ENCODE measurements at regions of chr5 and their contacts with region 1.

Region 1: DNA sequence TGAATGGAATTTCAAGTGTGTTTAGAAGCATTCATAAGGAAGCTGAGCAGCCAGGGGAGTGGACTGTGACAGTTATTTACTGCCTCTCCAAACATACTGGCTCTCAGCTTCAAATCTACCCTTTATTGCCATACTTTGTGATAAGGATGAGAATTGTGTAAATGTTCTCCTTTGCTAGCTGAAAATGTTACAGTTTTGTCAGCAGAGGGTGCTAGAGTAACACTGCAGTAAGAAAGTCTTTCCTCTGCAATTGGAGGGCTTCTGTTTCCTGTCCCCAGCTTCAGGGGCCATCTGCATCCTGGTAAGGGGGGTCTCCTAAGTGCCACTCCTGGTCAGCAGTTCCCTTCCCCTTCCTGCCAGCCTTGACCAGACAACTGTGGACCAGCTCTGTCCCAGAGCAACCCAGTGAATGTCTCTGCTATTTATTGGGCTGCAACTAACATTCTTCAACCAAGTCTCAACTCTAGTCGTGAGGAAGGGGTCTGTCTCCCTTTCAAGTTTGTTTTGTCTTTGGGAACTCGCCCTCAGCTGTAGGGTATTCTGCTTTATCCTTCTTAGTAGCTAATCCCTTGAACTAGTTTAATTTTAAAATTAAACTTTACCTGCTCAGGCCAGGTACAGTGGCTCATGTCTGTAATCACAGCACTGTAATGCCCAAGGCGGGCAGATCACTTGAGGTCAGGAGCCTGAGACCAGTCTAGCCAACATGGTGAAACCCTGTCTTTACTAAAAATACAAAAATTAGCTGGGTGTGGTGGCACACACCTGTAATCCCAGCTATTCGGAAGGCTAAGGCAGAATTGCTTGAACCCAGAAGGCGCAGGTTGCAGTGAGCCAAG is 45.3 kb downstream of the RAPGEF6 start:
- DNase-seq: peak in 8 of 9 donors; percentile 8 to 71 (median 62)
- ATAC-seq: peak; percentile 80
- H3K4me3 ChIP-seq: no peak overlapping the region
- H3K4me3 Mint-ChIP-seq: no peak overlapping the region
- H3K27ac ChIP-seq: peak overlapping the region; percentile 9
- H3K27ac Mint-ChIP-seq: peak overlapping the region; percentile 10 to 75 (median 52)
- H3K4me1 ChIP-seq: peaks cover 4 to 5% of the 10 kb centered on the region in 2 donors
- H3K4me1 Mint-ChIP-seq: peaks cover 21 to 63% (median 58%) of the 10 kb centered on the region in 7 donors
- H3K27me3 ChIP-seq: no peaks in the 10 kb centered on the region
- H3K27me3 Mint-ChIP-seq: no peaks in the 10 kb centered on the region

Region 2: DNA sequence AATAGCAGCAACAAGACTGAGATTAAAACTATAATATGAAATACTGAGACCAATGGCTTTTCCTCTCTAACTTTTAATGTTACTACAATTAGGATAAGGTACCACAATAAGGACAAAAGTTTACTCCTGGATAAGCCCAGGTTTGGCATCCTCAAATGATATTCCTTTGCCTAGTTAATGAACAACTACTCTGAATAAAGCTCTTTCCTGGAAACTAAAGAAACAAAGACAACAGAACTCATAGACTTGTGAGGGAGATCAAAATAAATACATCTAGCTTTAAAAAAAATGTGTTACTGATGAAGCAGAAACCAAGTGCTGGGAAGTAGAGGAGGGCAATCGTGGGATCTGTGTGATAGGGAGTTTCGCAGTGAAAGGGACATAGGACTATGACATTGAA is 64.6 kb after region 1 on chr5:
- CTCF ChIA-PET with region 1: no interaction called
- POLR2A ChIA-PET with region 1: no interaction called
- intact Hi-C with region 1: no loop called
- DNase-seq: no peak
- ATAC-seq: no peak
- H3K4me3 ChIP-seq: no peak overlapping the region
- H3K4me3 Mint-ChIP-seq: no peak overlapping the region
- H3K27ac ChIP-seq: no peak overlapping the region
- H3K27ac Mint-ChIP-seq: peak overlapping the region in 2 of 9 donors; percentile 9 to 61
- H3K4me1 ChIP-seq: no peaks in the 10 kb centered on the region
- H3K4me1 Mint-ChIP-seq: peaks cover 3 to 22% (median 9%) of the 10 kb centered on the region in 7 donors
- H3K27me3 ChIP-seq: no peaks in the 10 kb centered on the region
- H3K27me3 Mint-ChIP-seq: no peaks in the 10 kb centered on the region

Region 3: DNA sequence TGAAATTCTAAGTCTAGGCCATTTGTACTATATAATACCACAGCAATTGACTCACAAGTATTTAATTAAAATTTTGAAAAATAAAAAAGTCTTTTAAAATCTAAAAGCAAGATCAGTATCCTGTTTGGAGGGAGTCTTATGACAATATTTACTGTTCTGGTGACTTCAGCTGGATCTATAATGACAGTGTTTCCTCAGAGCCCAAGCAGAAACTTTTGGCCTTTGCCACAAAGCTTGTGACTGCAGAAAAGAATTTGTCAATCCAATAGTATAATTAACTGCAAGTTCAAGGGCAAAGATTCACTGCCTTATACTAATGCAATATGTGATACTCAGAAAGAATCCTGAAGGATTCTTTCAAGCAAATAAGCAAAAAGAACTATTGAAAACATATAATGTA is 94.9 kb after region 1 on chr5:
- CTCF ChIA-PET with region 1: no interaction called
- POLR2A ChIA-PET with region 1: no interaction called
- intact Hi-C with region 1: loop called in 1 of 2 experiments (anchors 1 kb)
- DNase-seq: no peak
- ATAC-seq: no peak
- H3K4me3 ChIP-seq: no peak overlapping the region
- H3K4me3 Mint-ChIP-seq: no peak overlapping the region
- H3K27ac ChIP-seq: no peak overlapping the region
- H3K27ac Mint-ChIP-seq: no peak overlapping the region
- H3K4me1 ChIP-seq: no peaks in the 10 kb centered on the region
- H3K4me1 Mint-ChIP-seq: peaks cover 0 to 5% (median 0%) of the 10 kb centered on the region in 7 donors
- H3K27me3 ChIP-seq: no peaks in the 10 kb centered on the region
- H3K27me3 Mint-ChIP-seq: no peaks in the 10 kb centered on the region

Region 4: GRCh38 chr5:131810510-131811249 is 221.0 kb after region 1 on chr5:
- CTCF ChIA-PET with region 1: interaction called, 3 read pairs
- POLR2A ChIA-PET with region 1: no interaction called
- intact Hi-C with region 1: loop called in 1 of 2 experiments (anchors 2 kb)
- DNase-seq: peak in 4 of 9 donors; percentile 21 to 25 (median 22)
- ATAC-seq: peak; percentile 52
- H3K4me3 ChIP-seq: no peak overlapping the region
- H3K4me3 Mint-ChIP-seq: no peak overlapping the region
- H3K27ac ChIP-seq: no peak overlapping the region
- H3K27ac Mint-ChIP-seq: no peak overlapping the region
- H3K4me1 ChIP-seq: no peaks in the 10 kb centered on the region
- H3K4me1 Mint-ChIP-seq: peaks cover 0 to 4% (median 0%) of the 10 kb centered on the region in 7 donors
- H3K27me3 ChIP-seq: no peaks in the 10 kb centered on the region
- H3K27me3 Mint-ChIP-seq: peaks cover 0 to 24% (median 0%) of the 10 kb centered on the region in 5 donors

Region 5: DNA sequence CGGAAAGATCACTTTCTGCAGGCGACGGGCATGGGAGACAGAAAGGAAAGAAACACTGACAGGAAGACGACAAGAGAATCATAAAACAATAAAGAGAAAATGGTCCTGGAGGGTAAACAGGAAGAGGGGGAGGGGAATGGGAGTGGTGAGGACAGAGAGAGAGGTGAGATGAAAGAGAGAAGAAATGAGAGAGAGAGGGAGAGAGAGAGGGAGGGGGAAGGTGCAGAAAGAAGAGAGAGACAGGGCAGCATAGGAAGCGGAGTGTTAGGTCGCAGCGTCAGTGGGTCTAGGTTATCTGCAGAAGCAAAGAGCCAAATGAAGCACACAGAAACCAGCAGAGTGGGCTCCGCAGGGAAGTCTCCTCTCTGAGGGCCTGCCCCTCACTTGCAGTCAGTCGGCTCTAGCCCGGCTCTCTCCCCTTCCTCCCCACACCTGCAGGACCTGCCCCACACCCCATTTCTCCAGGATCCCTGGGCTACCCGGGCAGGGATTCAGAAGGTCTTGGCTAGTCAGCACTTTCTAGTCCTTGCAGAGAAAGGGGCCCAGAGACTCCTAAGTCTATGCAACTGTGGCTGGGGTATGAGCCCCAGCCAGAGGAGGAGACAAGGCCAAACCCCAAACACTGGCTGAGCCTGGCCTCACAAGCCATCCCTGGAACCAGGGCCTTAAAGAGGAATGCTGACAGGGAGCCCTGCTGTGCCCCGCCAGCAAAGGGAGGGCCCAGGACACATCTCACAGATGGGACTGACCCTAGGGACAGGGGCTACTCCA is 385.4 kb after region 1 on chr5:
- CTCF ChIA-PET with region 1: interaction called, 3 read pairs
- POLR2A ChIA-PET with region 1: no interaction called
- intact Hi-C with region 1: loop called in 1 of 2 experiments (anchors 1 kb)
- DNase-seq: peak in 7 of 9 donors; percentile 23 to 76 (median 65)
- ATAC-seq: peak; percentile 74
- H3K4me3 ChIP-seq: peak overlapping the region; percentile 61
- H3K4me3 Mint-ChIP-seq: peak overlapping the region; percentile 79 to 97 (median 84)
- H3K27ac ChIP-seq: peak overlapping the region; percentile 76
- H3K27ac Mint-ChIP-seq: peak overlapping the region; percentile 90 to 99 (median 95)
- H3K4me1 ChIP-seq: peaks cover 34 to 46% of the 10 kb centered on the region in 2 donors
- H3K4me1 Mint-ChIP-seq: peaks cover 34 to 85% (median 75%) of the 10 kb centered on the region in 7 donors
- H3K27me3 ChIP-seq: no peaks in the 10 kb centered on the region
- H3K27me3 Mint-ChIP-seq: peaks cover 0 to 7% (median 0%) of the 10 kb centered on the region in 5 donors

Region 6: DNA sequence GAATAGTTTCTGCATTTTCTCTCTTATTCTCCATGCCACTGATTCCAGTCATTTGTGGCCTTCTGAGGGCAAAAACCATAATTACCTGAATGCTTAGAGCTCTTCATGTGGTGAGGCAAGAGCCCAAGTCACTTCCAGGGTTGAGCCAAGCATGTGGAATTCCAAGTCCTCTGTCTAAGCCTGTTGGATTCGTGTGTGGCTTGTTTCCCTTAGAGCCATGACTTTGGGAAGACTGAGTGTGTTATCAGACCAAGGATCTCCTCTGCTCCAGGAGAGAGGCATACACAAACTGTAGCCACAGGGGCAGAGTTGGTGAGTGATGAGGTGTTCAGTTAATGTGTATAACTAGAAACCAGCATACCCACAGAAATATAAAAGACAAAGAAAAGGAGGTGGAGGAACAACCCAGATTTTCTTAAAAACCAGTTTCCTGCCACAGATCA is 806.9 kb after region 1 on chr5:
- CTCF ChIA-PET with region 1: no interaction called
- POLR2A ChIA-PET with region 1: no interaction called
- intact Hi-C with region 1: no loop called
- DNase-seq: peak in 3 of 9 donors; percentile 20 to 43 (median 31)
- ATAC-seq: peak; percentile 65
- H3K4me3 ChIP-seq: no peak overlapping the region
- H3K4me3 Mint-ChIP-seq: peak overlapping the region; percentile 35 to 73 (median 62)
- H3K27ac ChIP-seq: peak overlapping the region; percentile 35
- H3K27ac Mint-ChIP-seq: peak overlapping the region; percentile 68 to 94 (median 86)
- H3K4me1 ChIP-seq: peaks cover 19 to 65% of the 10 kb centered on the region in 2 donors
- H3K4me1 Mint-ChIP-seq: peaks cover 63 to 96% (median 94%) of the 10 kb centered on the region in 7 donors
- H3K27me3 ChIP-seq: no peaks in the 10 kb centered on the region
- H3K27me3 Mint-ChIP-seq: peaks cover 0 to 25% (median 0%) of the 10 kb centered on the region in 5 donors

Measured in naive thymus-derived CD4-positive, alpha-beta T cell (primary cell).